Heart left ventricle (tissue), 16 donors: ENCODE measurements at regions of chr10 and their contacts with region 1.

Region 1: DNA sequence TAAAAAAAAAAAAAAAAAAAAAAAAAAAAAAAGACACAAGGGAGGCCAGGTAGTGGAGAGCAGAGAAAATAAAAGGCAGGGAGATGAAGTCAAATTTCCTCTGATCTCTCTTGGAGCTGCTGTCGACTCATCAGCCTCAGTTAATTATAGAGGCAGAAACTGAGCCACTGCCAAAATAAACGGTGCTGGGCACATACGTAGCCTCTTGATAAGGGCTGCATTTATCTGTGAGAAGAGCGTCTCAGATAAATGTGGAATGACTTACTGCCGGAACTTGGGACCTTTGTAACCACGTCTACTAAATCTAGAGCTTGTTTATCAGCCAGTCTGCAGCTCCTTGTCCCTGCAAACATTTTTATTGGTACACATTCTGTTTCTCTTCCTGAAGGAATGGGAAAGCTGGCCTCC is 162.3 kb downstream of the BAMBI start:
- DNase-seq: peak in 4 of 5 donors; percentile 57 to 70 (median 58)
- ATAC-seq: peak; percentile 85 to 96 (median 94)
- H3K4me3 ChIP-seq: peak overlapping the region in 1 of 12 donors; percentile 0
- H3K27ac ChIP-seq: peak overlapping the region; percentile 4 to 88 (median 66)
- H3K4me1 ChIP-seq: peaks cover 0 to 40% (median 15%) of the 10 kb centered on the region in 12 donors
- H3K27me3 ChIP-seq: no peaks in the 10 kb centered on the region
- CTCF ChIP-seq: no peak
- POLR2A ChIP-seq: no peak

Region 2: DNA sequence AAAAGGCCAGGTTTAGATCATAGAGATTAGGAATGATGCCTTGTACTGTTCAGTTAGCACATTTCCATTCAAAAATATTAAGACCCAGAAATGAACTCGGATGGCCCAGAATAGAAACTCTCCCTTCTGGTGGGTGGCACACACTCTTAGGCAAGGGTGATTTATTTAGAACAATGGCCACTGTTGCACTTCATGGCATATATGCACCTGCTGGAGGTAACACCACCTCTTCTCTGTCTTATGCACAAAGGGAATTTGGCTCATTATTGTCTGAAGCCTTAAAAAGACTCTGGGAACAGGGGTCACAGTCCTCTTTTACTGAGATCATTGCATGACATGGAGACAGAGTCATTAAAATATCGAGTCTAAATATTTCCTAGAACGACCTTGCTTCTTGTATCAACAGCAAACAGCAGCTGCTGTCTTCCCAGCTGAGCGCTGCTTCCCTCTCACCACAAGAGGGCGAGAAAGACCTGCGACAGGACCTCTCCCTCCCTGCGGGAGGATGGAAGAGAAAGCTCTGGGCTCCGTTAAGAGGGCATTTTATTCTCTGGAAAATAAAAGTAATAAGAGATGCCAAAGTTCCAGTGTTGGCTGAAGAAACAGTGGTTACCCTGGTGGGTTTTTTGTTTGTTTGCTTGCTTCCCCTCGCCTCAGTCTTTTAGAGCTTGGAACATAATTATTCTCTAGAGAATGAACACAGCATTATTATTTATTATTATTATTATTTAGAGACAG is 175.9 kb before region 1 on chr10:
- intact Hi-C with region 1: no loop called
- DNase-seq: peak; percentile 70 to 81 (median 74)
- ATAC-seq: peak; percentile 66 to 93 (median 88)
- H3K4me3 ChIP-seq: no peak overlapping the region
- H3K27ac ChIP-seq: no peak overlapping the region
- H3K4me1 ChIP-seq: peaks cover 0 to 16% (median 3%) of the 10 kb centered on the region in 12 donors
- H3K27me3 ChIP-seq: peaks cover 0 to 20% (median 0%) of the 10 kb centered on the region in 9 donors
- CTCF ChIP-seq: peak; percentile 86 to 98 (median 96)
- POLR2A ChIP-seq: no peak

Region 3: DNA sequence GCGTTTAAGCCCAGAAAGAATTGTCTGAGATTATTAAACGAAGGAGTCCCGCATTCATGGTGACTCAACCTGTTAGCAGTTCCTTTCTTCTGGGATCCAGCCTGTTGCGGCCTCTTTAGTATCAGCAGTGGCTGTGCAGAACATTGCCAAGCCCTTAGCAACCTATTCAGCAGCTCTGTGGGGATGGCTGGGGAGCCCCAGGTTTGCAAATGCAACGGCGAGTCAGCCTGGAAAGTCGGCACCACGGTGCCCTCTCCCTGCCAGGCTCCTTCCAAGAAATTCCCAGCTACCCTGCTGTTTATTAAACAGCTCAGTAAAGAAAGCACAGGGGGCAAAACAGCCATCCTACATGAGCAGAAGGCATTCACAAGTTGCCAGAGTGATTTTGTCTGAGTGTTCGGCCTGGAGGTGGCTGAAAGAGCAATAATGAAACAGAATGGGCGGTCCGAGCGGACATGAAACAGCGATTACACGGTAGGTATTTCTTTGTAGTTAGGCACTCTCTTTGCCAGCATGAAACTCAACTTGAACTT is 36.0 kb after region 1 on chr10:
- intact Hi-C with region 1: loop called in 1 of 10 experiments (anchors 5 kb)
- DNase-seq: no peak
- ATAC-seq: peak in 2 of 4 donors; percentile 26 to 53
- H3K4me3 ChIP-seq: no peak overlapping the region
- H3K27ac ChIP-seq: no peak overlapping the region
- H3K4me1 ChIP-seq: peaks cover 0 to 20% (median 11%) of the 10 kb centered on the region in 12 donors
- H3K27me3 ChIP-seq: peaks cover 0 to 2% (median 0%) of the 10 kb centered on the region in 9 donors
- CTCF ChIP-seq: peak in 1 of 12 donors; percentile 10
- POLR2A ChIP-seq: no peak